ENCODE measurements at regions of chr7 and their contacts with region 1.

Region 1: DNA sequence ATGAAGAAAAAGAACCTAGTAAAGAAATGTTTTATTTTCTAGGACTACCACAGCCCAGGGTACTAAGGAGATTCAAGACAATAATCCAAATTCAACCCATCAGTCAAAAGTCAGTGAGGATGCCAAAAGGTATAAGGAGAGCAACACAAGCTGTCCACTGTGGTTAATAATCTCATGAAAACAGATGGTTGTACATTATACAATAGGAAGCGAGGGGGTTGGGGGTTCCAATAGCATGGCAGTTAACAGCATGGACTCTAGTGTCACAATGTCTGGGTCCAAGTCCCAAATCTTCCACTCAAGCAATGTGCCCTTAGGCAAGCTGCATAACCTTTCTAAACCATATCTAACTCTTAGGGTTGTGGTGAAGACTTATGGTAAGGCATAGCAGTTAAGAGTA is 35.1 kb downstream of the BRAF start:
- DNase-seq: no peak
- ATAC-seq: no peak
- H3K4me3 Mint-ChIP-seq: no peak overlapping the region
- H3K27ac Mint-ChIP-seq: no peak overlapping the region
- H3K4me1 Mint-ChIP-seq: peaks cover 80% of the 10 kb centered on the region
- H3K27me3 Mint-ChIP-seq: no peaks in the 10 kb centered on the region
- CTCF ChIP-seq: no peak

Region 2: GRCh38 chr7:140326116-140326928 is 563.3 kb before region 1 on chr7:
- CTCF ChIA-PET with region 1: no interaction called
- POLR2A ChIA-PET with region 1: no interaction called
- intact Hi-C with region 1: no loop called
- DNase-seq: peak; percentile 21
- ATAC-seq: peak; percentile 75
- H3K4me3 Mint-ChIP-seq: no peak overlapping the region
- H3K27ac Mint-ChIP-seq: no peak overlapping the region
- H3K4me1 Mint-ChIP-seq: no peaks in the 10 kb centered on the region
- H3K27me3 Mint-ChIP-seq: no peaks in the 10 kb centered on the region
- CTCF ChIP-seq: no peak

Region 3: GRCh38 chr7:140876519-140877248 is 13.0 kb before region 1 on chr7:
- CTCF ChIA-PET with region 1: no interaction called
- POLR2A ChIA-PET with region 1: no interaction called
- intact Hi-C with region 1: loop called (anchors 1 kb)
- DNase-seq: no peak
- ATAC-seq: no peak
- H3K4me3 Mint-ChIP-seq: no peak overlapping the region
- H3K27ac Mint-ChIP-seq: no peak overlapping the region
- H3K4me1 Mint-ChIP-seq: peaks cover 57% of the 10 kb centered on the region
- H3K27me3 Mint-ChIP-seq: no peaks in the 10 kb centered on the region
- CTCF ChIP-seq: no peak

Region 4: GRCh38 chr7:140902303-140902953 is 12.8 kb after region 1 on chr7:
- CTCF ChIA-PET with region 1: no interaction called
- POLR2A ChIA-PET with region 1: no interaction called
- intact Hi-C with region 1: loop called (anchors 1 kb)
- DNase-seq: no peak
- ATAC-seq: peak; percentile 40
- H3K4me3 Mint-ChIP-seq: peak overlapping the region; percentile 56
- H3K27ac Mint-ChIP-seq: peak overlapping the region; percentile 82
- H3K4me1 Mint-ChIP-seq: peaks cover 76% of the 10 kb centered on the region
- H3K27me3 Mint-ChIP-seq: no peaks in the 10 kb centered on the region
- CTCF ChIP-seq: no peak

Region 5: GRCh38 chr7:141533149-141533949 is 643.7 kb after region 1 on chr7:
- CTCF ChIA-PET with region 1: no interaction called
- POLR2A ChIA-PET with region 1: no interaction called
- intact Hi-C with region 1: no loop called
- DNase-seq: peak; percentile 29
- ATAC-seq: peak; percentile 45
- H3K4me3 Mint-ChIP-seq: no peak overlapping the region
- H3K27ac Mint-ChIP-seq: no peak overlapping the region
- H3K4me1 Mint-ChIP-seq: no peaks in the 10 kb centered on the region
- H3K27me3 Mint-ChIP-seq: peaks cover 23% of the 10 kb centered on the region
- CTCF ChIP-seq: peak; percentile 54